Endothelial cell of umbilical vein (primary cell): ENCODE measurements at regions of chr18 and their contacts with region 1.

Region 1: DNA sequence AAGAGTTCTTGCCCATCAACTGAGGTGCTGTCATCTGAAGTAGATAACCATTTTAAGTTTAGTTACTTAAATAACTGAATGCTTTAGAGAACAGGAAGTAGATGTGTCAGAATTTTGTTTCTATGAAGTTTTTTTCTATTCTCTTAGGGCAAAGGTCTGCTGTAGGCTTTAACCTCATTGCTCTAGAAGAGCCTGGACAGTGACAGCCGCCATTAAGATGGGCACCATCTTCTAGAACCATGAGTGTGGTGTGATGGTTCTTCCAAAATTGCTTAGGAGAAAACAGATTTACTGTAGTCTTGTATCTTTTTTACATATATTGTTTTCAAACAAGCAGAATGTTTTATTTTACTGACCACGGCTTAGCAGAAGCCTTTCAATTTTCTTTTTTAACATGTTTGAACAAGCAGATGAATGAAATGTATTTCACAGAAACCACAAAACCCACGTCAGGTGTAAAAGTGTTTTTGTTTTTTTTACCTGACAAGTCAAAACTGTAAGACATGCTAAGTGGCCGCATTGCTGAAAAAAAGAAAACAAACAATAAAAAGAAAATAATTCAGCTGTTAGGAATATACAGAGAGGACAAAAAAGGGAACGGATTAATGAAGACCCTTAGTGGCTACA is 77.9 kb downstream of the PRELID3A start:
- DNase-seq: no peak
- H3K4me3 ChIP-seq: no peak overlapping the region
- H3K27ac ChIP-seq: no peak overlapping the region
- H3K4me1 ChIP-seq: no peaks in the 10 kb centered on the region
- H3K27me3 ChIP-seq: no peaks in the 10 kb centered on the region
- CTCF ChIP-seq: no peak
- POLR2A ChIP-seq: no peak

Region 2: DNA sequence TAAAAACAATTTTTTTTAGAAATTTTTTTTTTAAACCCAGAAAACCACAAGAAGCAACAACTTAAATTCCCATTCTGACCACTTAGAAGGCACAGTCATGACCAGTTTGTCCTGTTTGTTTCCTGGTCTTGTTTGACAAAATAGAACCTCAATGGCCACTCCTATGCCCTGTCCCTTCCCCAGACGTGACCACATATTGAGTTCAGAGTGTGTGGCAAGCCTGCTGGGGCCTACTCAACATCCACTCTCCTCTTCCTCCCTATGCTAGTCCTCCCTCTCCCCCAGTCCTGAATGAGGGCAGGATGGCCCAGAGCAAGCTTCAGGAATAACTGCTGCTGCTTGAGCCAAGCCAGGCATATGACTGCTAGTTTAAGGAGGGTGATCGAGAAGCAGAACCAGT is 11.7 kb after region 1 on chr18:
- CTCF ChIA-PET with region 1: interaction called, 10 read pairs
- POLR2A ChIA-PET with region 1: no interaction called
- dilution Hi-C with region 1: no loop called
- intact Hi-C with region 1: no loop called
- DNase-seq: no peak
- H3K4me3 ChIP-seq: no peak overlapping the region
- H3K27ac ChIP-seq: no peak overlapping the region
- H3K4me1 ChIP-seq: no peaks in the 10 kb centered on the region
- H3K27me3 ChIP-seq: no peaks in the 10 kb centered on the region
- CTCF ChIP-seq: no peak
- POLR2A ChIP-seq: no peak